ENCODE measurements at regions of chrX and their contacts with region 1.

Region 1: GRCh38 chrX:119516157-119516702 is 48.0 kb downstream of the SLC25A5 start:
- DNase-seq: peak; percentile 82
- H3K4me3 Mint-ChIP-seq: no peak overlapping the region
- H3K27ac Mint-ChIP-seq: no peak overlapping the region
- H3K4me1 Mint-ChIP-seq: peaks cover 3% of the 10 kb centered on the region
- H3K27me3 Mint-ChIP-seq: no peaks in the 10 kb centered on the region

Region 2: GRCh38 chrX:119729408-119730201 is 213.4 kb after region 1 on chrX:
- intact Hi-C with region 1: loop called (anchors 1 kb)
- DNase-seq: peak; percentile 88
- H3K4me3 Mint-ChIP-seq: no peak overlapping the region
- H3K27ac Mint-ChIP-seq: no peak overlapping the region
- H3K4me1 Mint-ChIP-seq: peaks cover 5% of the 10 kb centered on the region
- H3K27me3 Mint-ChIP-seq: no peaks in the 10 kb centered on the region

Region 3: GRCh38 chrX:119880552-119881437 is 364.6 kb after region 1 on chrX:
- intact Hi-C with region 1: loop called (anchors 5 kb)
- DNase-seq: peak; percentile 77
- H3K4me3 Mint-ChIP-seq: no peak overlapping the region
- H3K27ac Mint-ChIP-seq: peak overlapping the region; percentile 41
- H3K4me1 Mint-ChIP-seq: peaks cover 10% of the 10 kb centered on the region
- H3K27me3 Mint-ChIP-seq: no peaks in the 10 kb centered on the region

Region 4: GRCh38 chrX:120125444-120125843 is 609.2 kb after region 1 on chrX:
- intact Hi-C with region 1: loop called (anchors 10 kb)
- DNase-seq: no peak
- H3K4me3 Mint-ChIP-seq: no peak overlapping the region
- H3K27ac Mint-ChIP-seq: no peak overlapping the region
- H3K4me1 Mint-ChIP-seq: no peaks in the 10 kb centered on the region
- H3K27me3 Mint-ChIP-seq: no peaks in the 10 kb centered on the region